ENCODE measurements at regions of chr6 and their contacts with region 1.

Region 1: DNA sequence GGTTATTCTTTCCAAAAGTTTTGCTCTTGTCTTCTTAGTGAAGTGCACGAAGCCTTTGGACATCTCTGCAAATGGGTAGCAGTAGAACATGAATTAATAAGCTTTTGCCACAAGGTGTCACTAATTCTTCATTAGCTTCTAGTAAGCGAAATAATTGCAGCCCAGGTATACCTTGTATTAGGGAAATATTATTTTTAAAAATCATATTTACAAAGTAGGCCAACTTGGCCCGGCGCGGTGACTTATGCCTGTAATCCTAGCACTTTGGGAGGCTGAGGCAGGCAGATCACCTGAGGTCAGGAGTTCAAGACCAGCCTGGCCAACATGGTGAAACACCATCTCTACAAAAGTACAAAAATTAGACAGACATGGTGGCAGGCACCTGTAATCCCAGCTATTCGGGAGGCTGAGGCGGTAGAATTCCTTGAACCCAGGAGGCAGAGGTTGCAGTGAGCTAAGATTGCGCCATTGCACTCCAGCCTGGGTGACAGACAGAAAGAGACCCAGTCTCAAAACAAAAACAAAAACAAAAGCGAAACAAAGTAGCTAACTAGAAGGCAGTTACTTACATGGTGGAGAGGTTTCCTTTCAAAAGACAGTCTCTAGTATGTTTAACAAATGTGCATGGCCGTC is 8.8 kb upstream of the RSPH3 start:
- DNase-seq: peak; percentile 22 to 76 (median 49)
- H3K4me3 ChIP-seq: peak overlapping the region in 1 of 3 experiments; percentile 48
- H3K4me3 Mint-ChIP-seq: peak overlapping the region; percentile 38 to 54
- H3K27ac ChIP-seq: peak overlapping the region in 1 of 2 donors; percentile 68
- H3K27ac Mint-ChIP-seq: peak overlapping the region in 6 of 7 donors; percentile 12 to 71 (median 63)
- H3K4me1 ChIP-seq: peaks cover 29 to 37% of the 10 kb centered on the region in 2 donors
- H3K4me1 Mint-ChIP-seq: peaks cover 45% of the 10 kb centered on the region
- H3K27me3 ChIP-seq: no peaks in the 10 kb centered on the region
- H3K27me3 Mint-ChIP-seq: peaks cover 0 to 2% (median 0%) of the 10 kb centered on the region in 3 donors
- CTCF ChIP-seq: peak; percentile 75

Region 2: DNA sequence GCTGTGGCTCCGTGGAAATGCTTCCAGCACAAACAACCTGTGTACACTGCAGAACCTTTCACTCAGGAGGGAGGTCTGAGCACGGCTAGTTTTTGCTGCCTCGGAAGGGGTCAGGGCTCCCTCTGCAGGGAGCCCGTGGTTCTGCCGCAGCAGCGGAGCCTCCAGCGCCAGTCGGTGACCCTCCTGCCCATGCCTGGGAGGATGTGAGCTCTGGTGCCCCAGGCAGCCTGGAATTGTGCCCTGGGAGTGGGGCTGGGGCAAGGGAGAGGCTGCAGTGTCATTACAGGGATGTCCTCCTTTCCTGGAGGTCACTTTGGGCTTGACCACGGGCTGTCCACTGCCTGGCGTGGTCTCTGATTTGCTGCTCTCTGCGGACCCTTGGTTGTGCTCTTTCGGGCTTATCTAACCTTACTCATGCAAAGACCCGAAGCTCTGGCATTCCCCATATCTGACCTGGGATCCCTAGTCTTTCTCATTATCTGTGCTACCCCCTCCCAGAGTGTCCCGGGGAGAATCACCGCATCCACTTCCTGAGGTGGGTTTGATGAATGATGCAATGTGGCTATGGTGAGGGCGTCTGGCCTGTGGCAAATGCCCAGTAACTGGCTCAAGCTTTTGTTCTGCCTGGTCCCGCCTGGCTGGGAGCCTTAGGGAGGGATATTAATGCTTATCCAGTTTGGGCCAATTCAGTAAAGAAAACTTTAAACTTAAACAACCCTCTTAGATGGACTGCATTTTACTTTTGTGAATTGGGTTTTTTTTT is 95.6 kb after region 1 on chr6:
- intact Hi-C with region 1: loop called (anchors 2 to 5 kb)
- DNase-seq: peak; percentile 76 to 82 (median 79)
- H3K4me3 ChIP-seq: no peak overlapping the region
- H3K4me3 Mint-ChIP-seq: peak overlapping the region in 1 of 2 donors; percentile 4
- H3K27ac ChIP-seq: peak overlapping the region in 1 of 2 donors; percentile 18
- H3K27ac Mint-ChIP-seq: peak overlapping the region in 6 of 7 donors; percentile 73 to 85 (median 80)
- H3K4me1 ChIP-seq: peaks cover 33 to 44% of the 10 kb centered on the region in 2 donors
- H3K4me1 Mint-ChIP-seq: peaks cover 57% of the 10 kb centered on the region
- H3K27me3 ChIP-seq: no peaks in the 10 kb centered on the region
- H3K27me3 Mint-ChIP-seq: peaks cover 0 to 1% (median 0%) of the 10 kb centered on the region in 3 donors
- CTCF ChIP-seq: peak; percentile 95

Region 3: DNA sequence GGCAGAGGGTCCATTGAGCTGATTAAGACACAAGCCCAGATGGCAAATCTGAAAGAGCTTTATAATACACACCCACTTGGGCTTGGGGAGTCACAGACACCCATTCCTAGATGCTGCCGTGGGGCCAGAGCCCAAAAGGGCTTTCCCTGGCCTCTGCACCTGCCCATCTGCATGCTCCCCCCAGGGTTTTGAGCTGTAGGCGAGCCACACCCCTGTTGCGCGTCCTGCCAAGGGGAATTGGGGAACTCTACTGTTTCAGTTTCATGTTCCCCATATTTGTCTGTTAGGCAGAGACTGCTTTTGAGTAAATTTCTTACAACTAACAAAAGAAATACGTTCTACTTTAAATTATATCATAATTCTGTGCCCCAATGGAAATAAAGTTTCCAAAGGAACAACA is 107.6 kb after region 1 on chr6:
- intact Hi-C with region 1: loop called in 1 of 2 experiments (anchors 5 kb)
- DNase-seq: peak; percentile 81 to 88 (median 86)
- H3K4me3 ChIP-seq: peak overlapping the region in 1 of 3 experiments; percentile 46
- H3K4me3 Mint-ChIP-seq: peak overlapping the region in 1 of 2 donors; percentile 39
- H3K27ac ChIP-seq: peak overlapping the region; percentile 97 to 99
- H3K27ac Mint-ChIP-seq: peak overlapping the region; percentile 99 to 100 (median 100)
- H3K4me1 ChIP-seq: peaks cover 86 to 87% of the 10 kb centered on the region in 2 donors
- H3K4me1 Mint-ChIP-seq: peaks cover 84% of the 10 kb centered on the region
- H3K27me3 ChIP-seq: no peaks in the 10 kb centered on the region
- H3K27me3 Mint-ChIP-seq: peaks cover 0 to 4% (median 0%) of the 10 kb centered on the region in 3 donors
- CTCF ChIP-seq: no peak

Region 4: DNA sequence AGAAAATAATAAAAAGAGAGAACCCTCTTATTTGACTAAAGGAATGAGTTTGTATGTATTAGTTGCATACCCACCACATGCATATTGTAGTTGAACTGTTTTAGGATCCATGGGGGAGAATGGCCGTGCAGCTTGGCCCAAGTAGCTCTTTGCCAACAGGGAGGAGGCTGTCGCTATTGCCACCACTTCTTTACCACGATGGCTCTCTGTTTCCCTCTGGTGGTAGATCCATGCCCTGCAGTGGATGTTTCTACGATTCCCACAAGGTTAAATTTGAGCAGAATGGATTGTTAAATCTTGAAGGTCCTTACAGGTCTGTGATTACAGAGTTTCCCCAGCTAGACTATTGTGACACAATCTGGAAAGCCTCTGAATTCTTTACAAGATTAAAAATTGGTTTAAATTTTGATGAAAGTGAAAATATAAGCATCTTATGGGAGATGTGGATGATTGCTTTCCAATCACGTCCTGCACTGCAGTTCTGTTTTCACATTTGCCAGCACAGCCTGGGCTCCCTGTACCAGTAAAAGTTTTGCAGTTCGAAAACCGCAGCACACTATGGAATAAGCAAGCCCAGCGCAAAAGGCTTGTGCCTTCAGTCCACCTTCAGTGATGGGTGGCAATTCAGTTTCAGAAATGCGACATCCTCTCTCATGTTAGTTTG is 126.1 kb after region 1 on chr6:
- intact Hi-C with region 1: loop called (anchors 2 kb)
- DNase-seq: peak; percentile 65 to 82 (median 79)
- H3K4me3 ChIP-seq: no peak overlapping the region
- H3K4me3 Mint-ChIP-seq: no peak overlapping the region
- H3K27ac ChIP-seq: no peak overlapping the region
- H3K27ac Mint-ChIP-seq: peak overlapping the region in 1 of 7 donors; percentile 46
- H3K4me1 ChIP-seq: peaks cover 3 to 4% of the 10 kb centered on the region in 2 donors
- H3K4me1 Mint-ChIP-seq: peaks cover 9% of the 10 kb centered on the region
- H3K27me3 ChIP-seq: peaks cover 0 to 2% of the 10 kb centered on the region in 2 donors
- H3K27me3 Mint-ChIP-seq: peaks cover 5 to 11% (median 7%) of the 10 kb centered on the region in 3 donors
- CTCF ChIP-seq: peak; percentile 96

Measured in CD14-positive monocyte (primary cell).